PC-3 (cell line): ENCODE measurements at regions of chr3 and their contacts with region 1.

Region 1: GRCh38 chr3:129183569-129184395 is at the start of gene CNBP:
- DNase-seq: peak; percentile 92
- ATAC-seq: peak; percentile 95
- H3K4me3 ChIP-seq: peak within 1 kb of the TSS; percentile 84
- H3K27ac ChIP-seq: peak within 1 kb of the TSS; percentile 90
- H3K4me1 ChIP-seq: peaks cover 30% of the 10 kb centered on the region
- H3K27me3 ChIP-seq: no peaks in the 10 kb centered on the region
- CTCF ChIP-seq: no peak
- total RNA-seq, gene CNBP: 220 and 267 TPM in 2 replicates

Region 2: GRCh38 chr3:129058441-129059200 is 125.2 kb before region 1 on chr3:
- CTCF ChIA-PET with region 1: no interaction called
- POLR2A ChIA-PET with region 1: no interaction called
- intact Hi-C with region 1: no loop called
- DNase-seq: peak; percentile 8
- ATAC-seq: peak; percentile 40
- H3K4me3 ChIP-seq: no peak overlapping the region
- H3K27ac ChIP-seq: no peak overlapping the region
- H3K4me1 ChIP-seq: no peaks in the 10 kb centered on the region
- H3K27me3 ChIP-seq: no peaks in the 10 kb centered on the region
- CTCF ChIP-seq: no peak

Region 3: GRCh38 chr3:129211772-129212171 is 28.0 kb after region 1 on chr3:
- CTCF ChIA-PET with region 1: no interaction called
- POLR2A ChIA-PET with region 1: no interaction called
- intact Hi-C with region 1: loop called (anchors 1 kb)
- DNase-seq: peak; percentile 96
- ATAC-seq: peak; percentile 100
- H3K4me3 ChIP-seq: no peak overlapping the region
- H3K27ac ChIP-seq: peak overlapping the region; percentile 85
- H3K4me1 ChIP-seq: peaks cover 16% of the 10 kb centered on the region
- H3K27me3 ChIP-seq: no peaks in the 10 kb centered on the region
- CTCF ChIP-seq: no peak

Region 4: DNA sequence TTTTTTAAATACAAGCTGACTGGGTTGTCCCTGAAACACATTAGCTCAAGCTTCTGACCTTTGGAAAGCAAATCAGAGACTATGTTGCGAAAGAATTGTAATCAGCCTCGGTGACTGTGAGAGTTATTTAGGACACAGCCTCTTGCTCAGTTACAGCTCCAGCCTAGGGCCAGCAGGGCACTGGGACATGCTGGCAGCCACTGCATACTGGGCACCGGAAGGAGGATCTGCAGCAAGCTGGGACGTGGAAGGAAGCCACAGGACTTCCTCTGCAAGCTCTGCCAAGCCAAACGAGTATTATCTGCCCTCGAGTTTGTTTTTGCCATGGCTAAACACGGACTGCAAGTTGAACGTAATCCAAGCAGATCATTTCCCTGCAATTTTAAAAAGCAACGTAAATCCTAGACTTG is 41.2 kb after region 1 on chr3:
- CTCF ChIA-PET with region 1: interaction called, 3 read pairs
- POLR2A ChIA-PET with region 1: interaction called, 4 read pairs
- intact Hi-C with region 1: loop called (anchors 5 kb)
- DNase-seq: peak; percentile 79
- ATAC-seq: peak; percentile 60
- H3K4me3 ChIP-seq: peak overlapping the region; percentile 20; the same call in 1 of the 2 replicates
- H3K27ac ChIP-seq: peak overlapping the region; percentile 99
- H3K4me1 ChIP-seq: peaks cover 49% of the 10 kb centered on the region
- H3K27me3 ChIP-seq: no peaks in the 10 kb centered on the region
- CTCF ChIP-seq: no peak